ENCODE measurements at regions of chr9 and their contacts with region 1.

Region 1: DNA sequence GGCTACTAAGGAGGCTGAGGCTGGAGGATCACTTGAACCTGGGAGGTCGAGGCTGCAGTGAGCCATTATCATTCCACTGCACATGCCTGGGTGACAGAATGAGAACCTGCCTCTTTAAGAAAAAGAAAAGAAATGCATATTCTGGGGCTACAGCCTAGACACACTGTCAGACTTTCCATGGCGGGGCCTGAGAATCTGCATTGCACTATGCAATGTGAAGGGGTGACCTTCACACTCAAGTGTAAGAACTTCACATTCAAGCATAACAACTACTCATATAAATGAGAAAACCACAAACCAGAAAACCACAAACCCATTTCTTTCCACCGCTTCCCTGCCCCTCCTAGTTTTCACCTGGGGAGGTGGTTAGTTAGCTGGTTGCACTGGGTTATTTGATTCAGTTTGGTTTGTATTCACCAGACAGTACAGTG is 18.0 kb upstream of the FBP2 start:
- DNase-seq: no peak
- H3K4me3 ChIP-seq: no peak overlapping the region
- H3K27ac ChIP-seq: peak overlapping the region in 1 of 2 experiments; percentile 96; a peak in 2 of 4 replicates
- H3K4me1 ChIP-seq: peaks cover 0 to 45% of the 10 kb centered on the region in 2 experiments; a peak in 1 of 4 replicates
- H3K27me3 ChIP-seq: 0 out of 2 replicates have a peak, but pooled peaks cover 4% of the 10 kb centered on the region
- CTCF ChIP-seq: no peak
- EP300 ChIP-seq: no peak
- RAD21 ChIP-seq: no peak

Region 2: GRCh38 chr9:94534901-94535300 is 76.8 kb before region 1 on chr9:
- CTCF ChIA-PET with region 1: no interaction called
- POLR2A ChIA-PET with region 1: no interaction called
- DNase-seq: no peak
- H3K4me3 ChIP-seq: no peak overlapping the region
- H3K27ac ChIP-seq: no peak overlapping the region
- H3K4me1 ChIP-seq: no peaks in the 10 kb centered on the region
- H3K27me3 ChIP-seq: no peaks in the 10 kb centered on the region
- CTCF ChIP-seq: no peak
- EP300 ChIP-seq: no peak
- RAD21 ChIP-seq: no peak

Region 3: GRCh38 chr9:94623253-94623652 is 11.6 kb after region 1 on chr9:
- CTCF ChIA-PET with region 1: interaction called, 11 read pairs
- POLR2A ChIA-PET with region 1: interaction called, 3 read pairs
- DNase-seq: peak; percentile 67
- H3K4me3 ChIP-seq: no peak overlapping the region; a peak in 1 of 4 replicates
- H3K27ac ChIP-seq: peak overlapping the region in 1 of 2 experiments; percentile 24; a peak in 1 of 4 replicates
- H3K4me1 ChIP-seq: peaks cover 0 to 12% of the 10 kb centered on the region in 2 experiments; a peak in 1 of 4 replicates
- H3K27me3 ChIP-seq: no peaks in the 10 kb centered on the region
- CTCF ChIP-seq: peak; percentile 45
- EP300 ChIP-seq: no peak
- RAD21 ChIP-seq: peak; percentile 47; the same call in 1 of the 2 replicates

Region 4: DNA sequence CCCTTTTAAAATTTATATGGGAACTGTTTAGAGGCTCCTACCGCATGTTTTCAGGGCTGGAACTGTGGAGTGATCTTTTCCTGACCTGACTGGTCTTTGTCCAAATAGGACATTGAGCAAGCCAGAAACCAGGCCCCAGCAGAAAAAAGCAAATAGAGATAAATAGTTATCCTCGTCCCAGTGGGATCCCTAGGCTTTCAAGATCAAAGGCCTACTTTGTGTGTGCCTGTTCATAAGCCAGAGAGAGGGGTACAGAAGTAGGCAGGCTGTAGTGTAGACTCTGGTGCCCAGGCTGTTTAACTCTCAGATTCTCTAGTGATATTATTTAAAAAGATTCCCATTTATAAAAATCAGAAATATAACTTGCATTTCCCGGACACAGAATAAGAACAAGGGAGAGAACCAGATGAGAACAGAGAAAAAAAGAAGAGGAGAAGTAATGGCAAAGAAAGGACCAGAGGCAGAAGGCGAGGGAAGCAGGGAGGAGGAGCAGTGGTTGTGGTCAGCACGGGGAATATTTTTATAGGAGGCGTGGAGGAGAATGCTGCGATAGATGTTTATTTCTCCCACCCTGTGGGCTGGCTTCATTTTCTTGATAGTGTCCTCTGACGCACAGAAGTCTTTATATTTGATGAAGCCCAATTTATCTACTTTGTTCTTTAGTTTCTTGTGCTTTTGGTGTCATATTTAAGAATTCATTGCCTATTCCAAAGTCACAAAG is 216.1 kb after region 1 on chr9:
- CTCF ChIA-PET with region 1: no interaction called
- POLR2A ChIA-PET with region 1: no interaction called
- DNase-seq: no peak
- H3K4me3 ChIP-seq: no peak overlapping the region
- H3K27ac ChIP-seq: peak overlapping the region in 1 of 2 experiments; percentile 14; a peak in 1 of 4 replicates
- H3K4me1 ChIP-seq: peaks cover 0 to 2% of the 10 kb centered on the region in 2 experiments; a peak in 1 of 4 replicates
- H3K27me3 ChIP-seq: no peaks in the 10 kb centered on the region
- CTCF ChIP-seq: no peak
- EP300 ChIP-seq: no peak
- RAD21 ChIP-seq: no peak